ENCODE measurements at regions of chr17 and their contacts with region 1.

Region 1: DNA sequence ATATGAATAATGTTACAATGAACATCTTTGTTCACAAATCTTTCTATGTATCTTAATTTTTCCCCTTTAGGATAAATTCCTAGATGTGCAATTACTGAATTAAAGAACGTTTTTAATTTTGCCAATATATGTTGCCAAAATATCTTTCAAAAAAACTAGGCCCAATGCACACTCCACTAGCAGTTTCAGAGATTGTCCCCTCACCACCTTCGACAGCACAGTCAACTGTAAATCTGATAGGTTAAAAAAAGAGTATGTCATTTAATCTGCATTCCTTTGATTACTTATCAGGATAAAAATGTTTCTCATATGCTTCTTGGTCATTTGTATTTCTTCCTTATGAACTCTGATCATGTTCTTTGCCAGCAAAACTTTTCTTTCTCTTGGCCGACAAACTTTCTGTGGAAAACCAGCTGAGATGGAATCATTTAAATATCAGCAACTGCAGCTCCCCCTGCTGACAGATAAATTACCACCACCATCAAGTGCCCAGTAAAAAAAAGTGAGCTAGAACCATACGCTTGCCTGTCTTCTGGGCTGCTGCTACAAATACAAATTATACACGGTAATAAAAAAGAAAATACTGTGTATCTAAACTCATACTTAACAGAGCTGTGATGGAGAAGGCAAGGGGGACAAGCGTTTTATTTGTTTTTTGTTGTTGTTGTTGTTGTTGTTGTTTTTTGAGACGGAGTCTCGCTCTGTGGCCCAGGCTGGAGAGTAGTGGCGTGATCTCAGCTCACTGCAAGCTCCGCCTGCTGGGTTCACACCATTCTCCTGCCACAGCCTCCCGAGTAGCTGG is 19.6 kb upstream of the KANSL1 start:
- DNase-seq: peak; percentile 50 to 77 (median 57)
- H3K4me3 ChIP-seq: no peak overlapping the region
- H3K27ac ChIP-seq: no peak overlapping the region
- H3K4me1 ChIP-seq: no peaks in the 10 kb centered on the region
- H3K27me3 ChIP-seq: no peaks in the 10 kb centered on the region
- CTCF ChIP-seq: peak; percentile 45 to 89 (median 81)
- EP300 ChIP-seq: no peak
- POLR2A ChIP-seq: no peak

Region 2: DNA sequence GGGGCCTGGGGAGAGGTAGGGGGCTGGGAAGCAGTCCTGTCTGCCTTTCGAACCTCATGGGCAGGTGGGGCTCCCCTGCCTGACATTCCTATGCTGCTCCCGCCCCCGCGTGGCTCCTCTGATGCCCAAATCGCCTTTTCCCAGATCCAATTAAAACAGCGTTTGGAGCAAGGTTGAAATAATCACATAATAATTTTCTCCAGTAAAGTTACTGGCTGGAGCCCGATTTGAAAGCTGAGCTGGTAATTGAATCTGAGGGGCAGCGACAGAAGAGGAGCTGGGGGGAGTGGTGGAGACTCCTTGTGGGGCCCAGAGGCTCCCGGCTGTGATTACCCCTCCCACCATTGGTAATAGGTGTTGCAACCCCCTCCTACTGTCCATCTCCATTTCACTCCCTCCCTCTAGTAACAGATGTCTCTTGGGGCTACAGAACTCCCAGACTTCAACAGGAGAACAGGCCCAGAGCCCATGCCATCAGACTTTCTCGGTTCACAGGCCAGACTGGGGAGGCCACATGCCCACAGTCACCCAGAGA is 1205.8 kb before region 1 on chr17:
- intact Hi-C with region 1: no loop called
- DNase-seq: no peak
- H3K4me3 ChIP-seq: no peak overlapping the region
- H3K27ac ChIP-seq: no peak overlapping the region
- H3K4me1 ChIP-seq: no peaks in the 10 kb centered on the region
- H3K27me3 ChIP-seq: no peaks in the 10 kb centered on the region
- CTCF ChIP-seq: no peak
- EP300 ChIP-seq: no peak
- POLR2A ChIP-seq: no peak

Region 3: DNA sequence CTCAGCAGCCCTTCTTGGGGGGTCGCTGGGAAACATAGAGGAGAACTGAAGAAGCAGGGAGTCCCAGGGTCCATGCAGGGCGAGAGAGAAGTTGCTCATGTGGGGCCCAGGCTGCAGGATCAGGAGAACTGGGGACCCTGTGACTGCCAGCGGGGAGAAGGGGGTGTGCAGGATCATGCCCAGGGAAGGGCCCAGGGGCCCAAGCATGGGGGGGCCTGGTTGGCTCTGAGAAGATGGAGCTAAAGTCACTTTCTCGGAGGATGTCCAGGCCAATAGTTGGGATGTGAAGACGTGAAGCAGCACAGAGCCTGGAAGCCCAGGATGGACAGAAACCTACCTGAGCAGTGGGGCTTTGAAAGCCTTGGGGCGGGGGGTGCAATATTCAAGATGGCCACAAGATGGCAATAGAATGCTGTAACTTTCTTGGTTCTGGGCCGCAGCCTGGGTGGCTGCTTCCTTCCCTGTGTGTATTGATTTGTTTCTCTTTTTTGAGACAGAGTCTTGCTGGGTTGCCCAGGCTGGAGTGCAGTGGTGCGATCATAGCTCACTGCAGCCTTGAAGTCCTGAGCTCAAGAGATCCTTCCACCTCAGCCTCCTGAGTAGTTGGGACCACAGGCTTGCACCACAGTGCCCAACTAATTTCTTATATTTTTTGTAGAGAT is 210.4 kb before region 1 on chr17:
- intact Hi-C with region 1: loop called in 3 of 4 experiments (anchors 5 to 10 kb)
- DNase-seq: peak; percentile 51 to 75 (median 73)
- H3K4me3 ChIP-seq: no peak overlapping the region
- H3K27ac ChIP-seq: no peak overlapping the region
- H3K4me1 ChIP-seq: peaks cover 2% of the 10 kb centered on the region
- H3K27me3 ChIP-seq: no peaks in the 10 kb centered on the region
- CTCF ChIP-seq: peak; percentile 87 to 89 (median 87)
- EP300 ChIP-seq: no peak
- POLR2A ChIP-seq: peak; percentile 0

Region 4: GRCh38 chr17:46044286-46044928 is 168.4 kb before region 1 on chr17:
- intact Hi-C with region 1: loop called in 1 of 4 experiments (anchors 1 kb)
- DNase-seq: peak; percentile 64 to 88 (median 74)
- H3K4me3 ChIP-seq: no peak overlapping the region
- H3K27ac ChIP-seq: peak overlapping the region in 1 of 2 donors; percentile 29
- H3K4me1 ChIP-seq: peaks cover 4% of the 10 kb centered on the region
- H3K27me3 ChIP-seq: no peaks in the 10 kb centered on the region
- CTCF ChIP-seq: peak; percentile 64 to 94 (median 94)
- EP300 ChIP-seq: no peak
- POLR2A ChIP-seq: no peak

Region 5: DNA sequence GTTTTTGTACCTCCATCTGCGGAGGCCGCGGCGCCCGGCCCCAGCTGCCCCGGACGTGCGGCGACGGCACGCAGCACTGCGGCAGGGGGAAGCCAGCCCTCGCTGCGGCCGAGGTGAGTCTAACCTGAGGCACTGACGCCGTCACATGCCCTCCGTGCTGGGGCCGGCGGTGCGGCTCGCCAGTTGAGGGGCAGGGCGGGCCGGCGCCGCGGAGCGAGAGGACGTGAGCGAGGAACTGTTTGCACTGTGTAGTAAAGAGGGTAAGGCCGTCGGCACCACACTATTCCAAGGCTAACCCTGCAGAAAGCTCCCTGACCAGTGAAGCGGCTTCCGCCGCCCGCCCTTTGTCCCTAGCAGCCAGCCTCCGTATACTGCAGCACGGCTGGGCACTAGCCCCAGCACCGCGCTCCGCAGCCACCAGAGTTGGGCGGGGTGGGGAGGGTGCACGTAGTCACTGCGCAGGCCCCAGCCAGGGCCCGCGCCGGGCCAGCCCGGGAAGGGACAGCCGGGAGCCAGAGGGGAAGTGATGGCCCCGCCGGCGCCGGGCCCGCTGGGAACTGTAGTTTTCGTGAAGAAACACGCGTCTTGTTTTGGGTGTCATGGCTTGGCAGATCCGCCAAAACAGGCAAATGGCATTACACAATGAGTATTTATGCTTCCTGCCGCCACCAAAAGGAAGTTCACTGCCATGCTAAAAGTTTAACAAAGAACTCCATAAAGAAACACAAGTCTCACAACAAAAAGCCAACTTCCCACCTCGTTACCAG is 19.0 kb before region 1 on chr17:
- intact Hi-C with region 1: loop called in 1 of 4 experiments (anchors 2 kb)
- DNase-seq: peak; percentile 93 to 96 (median 95)
- H3K4me3 ChIP-seq: peak overlapping the region; percentile 88
- H3K27ac ChIP-seq: peak overlapping the region; percentile 84 to 98
- H3K4me1 ChIP-seq: peaks cover 15% of the 10 kb centered on the region
- H3K27me3 ChIP-seq: no peaks in the 10 kb centered on the region
- CTCF ChIP-seq: peak in 2 of 3 donors; percentile 54 to 77
- EP300 ChIP-seq: no peak
- POLR2A ChIP-seq: no peak